Brain microvascular endothelial cell (primary cell): ENCODE measurements at regions of chr3 and their contacts with region 1.

Region 1: DNA sequence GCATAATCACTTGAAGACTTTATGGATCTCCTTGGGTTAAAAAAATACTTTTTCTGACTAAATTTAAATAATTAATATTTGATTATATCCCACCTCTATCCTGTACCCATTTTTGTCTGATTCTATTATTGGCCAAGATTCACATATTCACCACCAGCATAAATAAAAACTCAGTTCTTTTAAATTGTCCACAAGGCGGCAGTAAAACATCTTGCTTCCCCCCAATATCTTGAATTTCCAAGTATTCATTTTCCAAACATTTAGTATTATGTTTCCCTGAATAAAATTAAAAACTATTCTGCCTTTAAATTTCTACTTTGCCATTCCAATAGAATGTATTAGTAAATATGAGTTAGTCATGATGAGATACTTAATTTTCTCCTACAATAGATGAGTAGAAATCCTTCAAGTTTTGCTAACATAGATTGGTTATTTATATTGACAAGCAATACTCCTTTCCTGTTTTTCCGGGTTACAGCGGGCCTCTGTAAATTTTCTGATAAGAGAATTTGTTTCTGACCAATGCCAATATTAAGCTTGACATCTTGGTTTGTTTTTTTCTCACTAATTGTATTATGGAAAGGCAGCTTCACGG is 218.7 kb upstream of the MDFIC2 start:
- DNase-seq: peak; percentile 7
- H3K4me3 ChIP-seq: no peak overlapping the region
- H3K27ac ChIP-seq: no peak overlapping the region
- H3K27me3 ChIP-seq: no peaks in the 10 kb centered on the region
- CTCF ChIP-seq: peak; percentile 48

Region 2: GRCh38 chr3:69983546-69984265 is 547.5 kb before region 1 on chr3:
- in situ Hi-C with region 1: no loop called
- DNase-seq: no peak
- H3K4me3 ChIP-seq: no peak overlapping the region
- H3K27ac ChIP-seq: no peak overlapping the region
- H3K27me3 ChIP-seq: no peaks in the 10 kb centered on the region
- CTCF ChIP-seq: no peak

Region 3: DNA sequence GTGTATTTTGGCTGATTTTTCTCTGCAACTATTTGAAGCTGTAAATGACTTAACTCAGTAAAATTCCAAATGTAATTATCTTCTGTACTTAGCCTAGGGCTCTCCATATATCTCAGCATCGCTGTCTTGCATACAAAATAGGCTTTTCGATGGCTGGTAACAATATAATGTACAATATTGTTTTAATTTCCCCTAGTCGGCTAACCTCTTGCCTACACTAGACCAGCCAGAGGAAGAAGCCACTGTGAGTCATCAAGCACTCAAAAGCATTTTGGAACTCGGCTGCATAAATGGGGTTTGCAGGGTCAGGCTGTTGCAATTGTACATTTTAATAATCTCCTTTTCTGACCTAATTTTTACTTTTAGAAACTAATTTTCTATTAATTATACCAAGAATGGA is 468.6 kb after region 1 on chr3:
- in situ Hi-C with region 1: no loop called
- DNase-seq: peak; percentile 78
- H3K4me3 ChIP-seq: no peak overlapping the region
- H3K27ac ChIP-seq: peak overlapping the region; percentile 53
- H3K27me3 ChIP-seq: no peaks in the 10 kb centered on the region
- CTCF ChIP-seq: no peak

Region 4: GRCh38 chr3:71064288-71064955 is 533.3 kb after region 1 on chr3:
- in situ Hi-C with region 1: loop called (anchors 25 kb)
- DNase-seq: peak; percentile 41
- H3K4me3 ChIP-seq: peak overlapping the region; percentile 73
- H3K27ac ChIP-seq: peak overlapping the region; percentile 86
- H3K27me3 ChIP-seq: no peaks in the 10 kb centered on the region
- CTCF ChIP-seq: peak; percentile 4

Region 5: GRCh38 chr3:71641674-71642073 is 1110.5 kb after region 1 on chr3:
- in situ Hi-C with region 1: loop called (anchors 25 kb)
- DNase-seq: peak; percentile 22
- H3K4me3 ChIP-seq: no peak overlapping the region
- H3K27ac ChIP-seq: no peak overlapping the region
- H3K27me3 ChIP-seq: no peaks in the 10 kb centered on the region
- CTCF ChIP-seq: no peak